BJ (cell line): ENCODE measurements at regions of chr11 and their contacts with region 1.

Region 1: GRCh38 chr11:8099291-8099899 is 18.4 kb downstream of the TUB start:
- DNase-seq: peak; percentile 26
- H3K4me3 ChIP-seq: no peak overlapping the region
- H3K27me3 ChIP-seq: no peaks in the 10 kb centered on the region
- CTCF ChIP-seq: peak; percentile 82

Region 2: DNA sequence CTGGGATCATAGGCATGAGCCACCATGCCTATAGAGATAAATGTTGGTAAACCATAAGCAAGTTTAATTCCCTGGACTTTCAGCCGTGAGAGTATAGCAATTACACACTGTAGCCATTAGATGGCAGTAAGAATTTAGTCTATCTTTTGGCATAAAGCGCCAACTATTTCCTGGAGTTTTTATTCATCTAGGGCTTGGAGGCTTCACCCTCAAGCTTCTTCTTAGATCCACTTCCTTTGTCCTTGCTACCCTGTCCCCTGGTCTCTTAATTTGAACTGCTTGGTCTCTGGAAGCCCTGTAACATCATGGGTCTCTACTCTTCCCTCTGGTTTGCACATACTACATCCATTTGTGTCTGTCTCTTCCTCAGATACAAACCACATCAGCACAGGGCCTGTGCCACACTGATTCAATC is 206.5 kb before region 1 on chr11:
- CTCF ChIA-PET with region 1: interaction called, 12 read pairs
- POLR2A ChIA-PET with region 1: no interaction called
- DNase-seq: no peak
- H3K4me3 ChIP-seq: no peak overlapping the region
- H3K27me3 ChIP-seq: no peaks in the 10 kb centered on the region
- CTCF ChIP-seq: peak; percentile 65

Region 3: GRCh38 chr11:7986768-7987559 is 112.4 kb before region 1 on chr11 and contains the start of gene EIF3F:
- CTCF ChIA-PET with region 1: interaction called, 13 read pairs
- POLR2A ChIA-PET with region 1: no interaction called
- DNase-seq: peak; percentile 99
- H3K4me3 ChIP-seq: peak within 1 kb of the TSS; percentile 78
- H3K27me3 ChIP-seq: no peaks in the 10 kb centered on the region
- CTCF ChIP-seq: peak; percentile 80
- polyA plus RNA-seq, gene EIF3F: 181 and 218 TPM in 2 replicates

Region 4: DNA sequence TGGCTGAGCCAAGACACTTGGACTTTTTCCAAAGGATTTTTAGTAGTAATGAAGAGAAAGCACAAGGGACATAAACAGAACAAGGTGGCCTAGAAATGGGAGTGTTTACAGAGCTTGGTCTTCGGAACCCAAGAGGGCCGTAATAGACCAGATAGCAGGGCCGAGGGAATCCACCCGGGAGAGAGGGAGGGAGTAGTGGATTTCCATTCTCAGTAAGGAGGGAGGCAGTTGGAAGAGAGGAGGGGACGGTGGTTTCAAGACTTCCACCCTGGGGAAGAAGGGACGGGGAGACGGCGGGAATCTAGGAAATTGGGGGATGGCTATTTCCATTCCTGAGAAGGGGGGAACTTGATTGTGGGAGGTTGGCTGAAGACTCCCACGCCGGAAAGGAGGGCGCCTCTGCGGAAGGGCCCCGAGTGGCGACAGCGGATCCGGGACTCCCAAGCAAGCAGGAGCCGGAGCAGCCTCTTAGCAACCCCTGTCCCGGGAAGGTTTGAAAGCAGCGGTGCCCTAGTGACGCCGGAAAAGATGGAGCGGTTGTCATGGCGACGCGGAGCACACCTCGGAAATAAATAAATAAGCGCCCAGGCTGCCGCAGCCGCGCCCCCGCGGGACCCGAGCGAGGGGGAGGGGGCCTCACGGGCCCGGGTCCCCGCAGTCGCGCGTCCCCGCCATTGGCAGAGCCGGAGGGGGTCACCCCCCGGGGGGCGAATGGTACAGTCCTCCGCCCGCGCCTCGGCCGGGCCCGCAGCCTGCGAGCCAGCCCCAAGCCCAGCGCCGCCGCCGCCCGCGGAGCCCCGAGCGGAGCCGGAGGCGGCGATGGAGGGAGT is 80.7 kb before region 1 on chr11:
- CTCF ChIA-PET with region 1: interaction called, 60 read pairs
- POLR2A ChIA-PET with region 1: no interaction called
- DNase-seq: no peak
- H3K4me3 ChIP-seq: peak overlapping the region; percentile 47
- H3K27me3 ChIP-seq: no peaks in the 10 kb centered on the region
- CTCF ChIP-seq: no peak

Region 5: GRCh38 chr11:8023831-8024555 is 75.4 kb before region 1 on chr11:
- CTCF ChIA-PET with region 1: interaction called, 441 read pairs
- POLR2A ChIA-PET with region 1: no interaction called
- DNase-seq: no peak
- H3K4me3 ChIP-seq: no peak overlapping the region
- H3K27me3 ChIP-seq: no peaks in the 10 kb centered on the region
- CTCF ChIP-seq: no peak

Region 6: DNA sequence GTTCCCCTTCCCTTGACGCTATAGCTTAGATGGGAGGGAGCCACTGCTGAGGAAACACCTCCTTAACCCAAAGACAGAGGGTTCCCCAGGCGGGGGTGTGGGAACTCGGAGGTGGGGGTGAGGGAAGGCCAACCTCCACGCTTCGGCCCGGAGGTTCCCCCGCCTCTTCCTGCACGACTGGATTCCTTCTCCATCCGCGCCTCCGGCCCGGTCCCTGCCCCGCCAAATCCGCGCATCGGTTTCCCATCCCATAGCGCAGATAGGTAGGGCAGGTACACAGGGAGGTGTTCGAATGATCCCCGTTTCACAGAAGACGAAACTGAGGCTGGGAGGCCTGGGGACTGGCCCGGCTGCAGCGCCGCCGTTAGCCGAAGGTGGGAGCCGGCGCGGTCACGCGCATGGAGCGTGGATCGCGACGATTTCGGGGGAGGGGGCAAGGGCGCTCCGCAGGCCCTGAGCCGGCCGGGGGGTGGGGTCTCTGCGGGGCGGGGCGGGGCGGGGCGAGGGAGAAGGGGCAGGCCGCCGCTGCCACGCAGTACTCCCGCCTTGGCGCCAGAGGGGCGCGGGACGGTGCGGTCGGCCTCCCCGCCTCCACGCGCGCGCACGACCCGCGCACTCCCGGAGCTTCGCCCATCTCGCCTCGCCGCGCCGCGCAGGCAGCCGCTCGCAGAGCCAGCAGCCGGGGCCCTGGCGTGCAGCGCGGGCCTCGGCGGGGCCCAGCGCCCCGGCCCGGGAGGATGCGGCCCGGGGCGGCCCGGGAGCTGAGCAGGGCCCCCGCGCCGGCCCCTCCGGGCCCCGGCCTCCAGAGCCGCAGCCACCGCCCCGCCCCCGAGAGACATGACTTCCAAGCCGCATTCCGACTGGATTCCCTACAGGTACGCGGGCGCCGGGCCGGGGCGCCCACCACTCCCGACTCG is 18.5 kb before region 1 on chr11 and contains the start of gene TUB:
- CTCF ChIA-PET with region 1: interaction called, 105 read pairs
- POLR2A ChIA-PET with region 1: no interaction called
- DNase-seq: no peak
- H3K4me3 ChIP-seq: peak within 1 kb of the TSS; percentile 62
- H3K27me3 ChIP-seq: no peaks in the 10 kb centered on the region; the same call in 1 of the 2 replicates
- CTCF ChIP-seq: 0 out of 2 replicates have a peak, but pooled peaks have one; percentile 13
- polyA plus RNA-seq, gene TUB: 9.8 and 11.8 TPM in 2 replicates

Region 7: DNA sequence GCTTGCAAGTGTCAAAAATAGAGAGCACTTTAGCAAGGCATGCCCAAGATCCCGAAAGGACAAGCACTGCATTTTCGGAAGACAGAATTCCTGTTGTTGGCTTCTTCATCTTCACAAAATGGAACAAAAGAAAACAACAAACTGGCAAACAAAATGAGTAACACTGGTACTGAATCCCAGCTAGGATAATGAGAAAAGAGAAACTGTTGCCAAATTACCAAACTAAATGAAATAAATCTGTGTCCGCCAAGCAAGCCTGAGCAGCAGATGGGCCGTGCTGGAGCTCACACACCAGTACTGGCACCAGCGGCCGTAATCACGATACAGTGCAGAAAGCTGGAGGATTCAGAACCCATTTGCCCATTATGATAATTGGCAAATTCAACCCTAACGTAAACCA is 12.2 kb after region 1 on chr11:
- CTCF ChIA-PET with region 1: interaction called, 49 read pairs
- POLR2A ChIA-PET with region 1: no interaction called
- DNase-seq: no peak
- H3K4me3 ChIP-seq: no peak overlapping the region
- H3K27me3 ChIP-seq: peaks cover 6% of the 10 kb centered on the region; the same call in 1 of the 2 replicates
- CTCF ChIP-seq: no peak